ENCODE measurements at regions of chr1 and their contacts with region 1.

Region 1: GRCh38 chr1:101238681-101239094 is 1.9 kb downstream of the S1PR1 start:
- DNase-seq: peak; percentile 52 to 95
- H3K4me3 ChIP-seq: peak overlapping the region; percentile 82 to 84
- H3K27ac ChIP-seq: peak overlapping the region in 1 of 2 donors; percentile 26
- H3K4me1 ChIP-seq: peaks cover 0 to 12% of the 10 kb centered on the region in 2 donors
- H3K27me3 ChIP-seq: no peaks in the 10 kb centered on the region
- CTCF ChIP-seq: peak; percentile 84 to 96 (median 96)

Region 2: DNA sequence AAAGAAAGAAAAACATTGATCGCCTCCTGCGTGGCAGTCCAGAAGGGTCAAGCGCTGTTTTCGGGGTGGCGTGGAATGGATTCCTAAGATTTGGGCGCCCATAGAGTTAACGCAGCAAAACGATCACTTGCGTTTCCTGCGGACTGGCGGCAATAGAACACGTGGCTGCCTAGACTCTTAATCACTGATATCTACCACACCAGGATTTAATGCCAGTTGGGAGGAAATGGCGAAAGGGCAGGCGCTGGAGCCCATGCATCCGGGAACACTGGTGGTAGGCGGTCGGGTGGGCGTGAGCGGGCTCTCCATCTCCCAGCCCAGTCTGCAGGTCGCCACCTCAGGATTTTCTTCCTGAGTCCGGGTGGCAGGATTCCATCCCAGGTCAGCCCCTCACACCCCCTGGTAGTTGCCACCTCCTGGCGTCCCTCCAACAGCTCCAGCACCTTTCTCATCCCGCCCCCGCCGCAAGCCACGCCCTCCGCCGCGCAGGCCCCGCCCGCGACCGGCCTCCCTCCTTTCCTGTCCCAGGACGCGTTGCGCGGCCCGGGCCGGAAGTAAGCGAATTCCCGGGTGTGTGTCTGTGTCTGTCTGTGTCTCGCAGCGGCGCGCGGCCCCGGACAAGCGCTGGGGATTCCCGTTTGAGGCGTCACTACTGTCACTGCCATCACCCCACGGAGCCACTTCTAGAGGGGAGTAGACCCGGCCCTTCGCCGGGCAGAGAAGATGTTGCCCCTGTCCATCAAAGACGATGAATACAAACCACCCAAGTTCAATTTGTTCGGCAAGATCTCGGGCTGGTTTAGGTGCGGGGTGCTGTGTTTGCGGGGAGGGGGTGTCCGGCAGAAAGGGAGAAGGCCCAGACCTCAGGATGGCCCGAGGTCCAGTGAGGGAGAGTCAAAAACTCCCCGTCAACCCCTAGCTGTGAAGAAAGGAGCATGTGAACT is 342.9 kb before region 1 on chr1 and contains the start of gene SLC30A7:
- intact Hi-C with region 1: loop called (anchors 10 kb)
- DNase-seq: peak; percentile 84 to 97
- H3K4me3 ChIP-seq: peak within 1 kb of the TSS; percentile 77 to 79
- H3K27ac ChIP-seq: peak within 1 kb of the TSS; percentile 96 to 97
- H3K4me1 ChIP-seq: peaks cover 0 to 13% of the 10 kb centered on the region in 2 donors
- H3K27me3 ChIP-seq: no peaks in the 10 kb centered on the region
- CTCF ChIP-seq: no peak
- total RNA-seq, gene SLC30A7: 12.1 TPM

Region 3: DNA sequence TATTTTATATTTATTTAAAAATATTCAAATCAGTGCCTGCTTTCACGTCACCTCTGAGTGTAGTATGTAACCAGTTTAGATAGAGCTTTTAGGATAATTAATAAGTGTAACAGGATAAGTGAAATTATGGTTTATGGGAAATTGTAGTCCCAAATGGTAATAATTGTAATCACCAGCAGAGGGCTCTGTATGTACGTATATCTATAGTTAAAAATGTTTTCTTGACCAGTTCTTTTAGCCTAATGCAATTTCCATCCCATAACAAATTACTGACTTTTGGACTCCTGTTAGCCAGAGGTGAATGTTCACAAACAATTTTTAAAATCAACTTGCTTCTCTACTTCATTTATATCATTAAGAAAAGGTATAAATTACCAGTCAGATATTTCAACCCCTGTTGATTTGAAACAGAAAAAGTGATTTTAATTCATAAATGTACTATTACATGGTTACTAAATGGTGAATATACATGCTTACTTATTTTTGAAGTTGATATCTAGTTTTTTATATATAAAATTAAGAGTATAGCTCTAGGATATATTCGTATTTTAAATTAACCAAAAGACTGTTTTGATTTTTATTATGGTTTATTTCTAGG is 317.5 kb before region 1 on chr1:
- intact Hi-C with region 1: loop called (anchors 2 kb)
- DNase-seq: no peak
- H3K4me3 ChIP-seq: no peak overlapping the region
- H3K27ac ChIP-seq: no peak overlapping the region
- H3K4me1 ChIP-seq: no peaks in the 10 kb centered on the region
- H3K27me3 ChIP-seq: no peaks in the 10 kb centered on the region
- CTCF ChIP-seq: peak; percentile 45 to 75 (median 59)

Region 4: GRCh38 chr1:101025657-101026504 is 212.8 kb before region 1 on chr1 and contains the start of gene DPH5:
- intact Hi-C with region 1: loop called (anchors 1 kb)
- DNase-seq: peak; percentile 45 to 94
- H3K4me3 ChIP-seq: peak within 1 kb of the TSS; percentile 76 to 82
- H3K27ac ChIP-seq: peak within 1 kb of the TSS; percentile 73 to 80
- H3K4me1 ChIP-seq: peaks cover 0 to 11% of the 10 kb centered on the region in 2 donors
- H3K27me3 ChIP-seq: no peaks in the 10 kb centered on the region
- CTCF ChIP-seq: peak in 1 of 3 experiments; percentile 4
- total RNA-seq, gene DPH5: 1.1 TPM

Region 5: DNA sequence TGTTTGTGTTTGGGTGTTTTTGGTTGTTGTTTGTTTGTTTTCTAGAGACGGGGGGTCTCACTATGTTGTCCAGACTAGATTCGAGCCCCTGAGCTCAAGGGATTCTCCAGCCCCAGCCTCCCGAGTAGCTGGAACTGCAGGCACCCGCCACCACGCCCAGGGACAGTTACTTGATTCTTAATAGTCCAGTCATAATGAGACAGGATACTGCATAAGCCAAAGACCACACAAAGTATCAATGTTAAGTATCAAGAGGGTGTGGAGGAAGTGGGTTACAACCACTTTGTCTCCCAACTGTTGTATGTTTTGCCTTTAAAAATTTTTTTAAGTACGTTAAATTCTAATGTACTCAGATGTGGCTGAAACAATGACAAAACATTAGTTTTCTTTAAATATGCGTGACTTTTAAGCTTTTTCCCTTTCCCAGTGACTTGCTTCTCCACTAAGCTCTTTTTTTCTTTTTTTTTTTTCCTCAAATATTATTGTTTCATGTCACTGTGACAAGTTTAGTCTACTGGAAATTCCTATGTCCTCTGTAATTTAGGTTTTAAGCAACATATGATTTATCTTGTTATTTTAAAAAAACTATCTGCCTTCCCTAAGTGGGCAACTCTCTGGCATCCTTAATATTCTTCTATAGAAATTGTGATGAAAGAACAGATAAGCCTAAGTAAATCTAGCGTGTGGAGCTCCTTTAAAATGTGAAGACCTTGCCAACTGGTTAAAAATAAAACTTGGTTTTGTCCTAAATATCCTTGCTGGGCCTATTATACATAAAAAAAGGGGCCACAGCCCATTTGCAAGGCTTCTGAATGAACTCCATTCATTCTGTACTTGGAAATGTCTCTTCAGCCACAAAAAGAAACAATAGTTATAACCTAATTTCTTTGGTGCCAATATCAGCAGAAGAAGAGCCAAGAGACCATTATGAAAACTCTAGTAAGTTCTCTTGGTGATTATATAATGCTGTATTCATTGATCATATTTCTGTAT is 156.9 kb before region 1 on chr1:
- intact Hi-C with region 1: no loop called
- DNase-seq: no peak
- H3K4me3 ChIP-seq: no peak overlapping the region
- H3K27ac ChIP-seq: no peak overlapping the region
- H3K4me1 ChIP-seq: no peaks in the 10 kb centered on the region
- H3K27me3 ChIP-seq: no peaks in the 10 kb centered on the region
- CTCF ChIP-seq: no peak

Region 6: DNA sequence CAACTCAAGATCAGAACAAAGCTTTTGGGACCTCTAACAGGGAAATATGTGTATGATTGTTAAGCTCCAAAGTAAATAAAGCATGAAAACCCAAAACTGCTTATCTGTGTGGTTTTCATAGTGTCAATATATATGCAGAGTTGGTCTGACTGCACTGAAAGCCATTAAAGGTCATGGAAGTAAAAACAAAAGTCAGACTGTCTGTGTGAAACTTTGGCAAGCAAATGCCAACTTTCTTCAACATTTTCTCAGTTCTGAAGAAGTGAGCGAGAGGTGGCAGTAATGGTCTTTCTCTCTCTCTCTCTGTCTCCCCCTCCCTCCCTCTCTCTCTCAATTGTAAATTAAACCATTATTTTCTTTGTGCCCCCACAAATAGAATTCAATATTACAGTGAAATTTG is 101.9 kb before region 1 on chr1:
- intact Hi-C with region 1: loop called (anchors 1 kb)
- DNase-seq: no peak
- H3K4me3 ChIP-seq: no peak overlapping the region
- H3K27ac ChIP-seq: no peak overlapping the region
- H3K4me1 ChIP-seq: peaks cover 0 to 9% of the 10 kb centered on the region in 2 donors
- H3K27me3 ChIP-seq: no peaks in the 10 kb centered on the region
- CTCF ChIP-seq: peak in 1 of 3 experiments; percentile 50

Region 7: GRCh38 chr1:101161619-101162018 is 77.1 kb before region 1 on chr1:
- intact Hi-C with region 1: no loop called
- DNase-seq: no peak
- H3K4me3 ChIP-seq: no peak overlapping the region
- H3K27ac ChIP-seq: no peak overlapping the region
- H3K4me1 ChIP-seq: no peaks in the 10 kb centered on the region
- H3K27me3 ChIP-seq: no peaks in the 10 kb centered on the region
- CTCF ChIP-seq: no peak

Region 8: DNA sequence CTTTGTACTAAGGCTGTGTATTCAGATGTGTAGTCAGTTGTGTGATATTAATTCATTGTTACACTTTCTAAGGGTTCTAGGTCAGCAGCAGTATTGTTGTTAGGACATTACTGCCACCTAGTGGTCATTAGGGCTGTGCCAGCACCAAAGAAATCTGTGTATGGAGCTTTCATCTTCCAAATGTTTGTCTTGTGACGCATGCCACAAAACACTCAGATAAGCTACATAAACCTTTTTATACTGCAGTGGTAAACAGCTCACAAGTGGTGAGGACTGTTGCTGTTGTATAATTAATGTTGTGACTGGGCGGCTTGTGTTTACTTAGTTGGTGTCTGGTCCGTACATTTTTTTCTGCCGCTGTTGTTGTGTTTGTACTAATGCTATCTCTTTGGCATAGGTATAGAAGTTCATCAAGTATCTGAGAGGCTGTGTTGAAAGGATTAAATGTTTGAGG is 49.8 kb after region 1 on chr1:
- intact Hi-C with region 1: loop called (anchors 5 kb)
- DNase-seq: peak in 1 of 2 donors; percentile 81
- H3K4me3 ChIP-seq: no peak overlapping the region
- H3K27ac ChIP-seq: no peak overlapping the region
- H3K4me1 ChIP-seq: no peaks in the 10 kb centered on the region
- H3K27me3 ChIP-seq: no peaks in the 10 kb centered on the region
- CTCF ChIP-seq: peak; percentile 67 to 92 (median 90)

Measured in ascending aorta (tissue), 2 donors.